GM12878 (cell line): ENCODE measurements at regions of chr1 and their contacts with region 1.

Region 1: GRCh38 chr1:212994926-212995325 is 20.7 kb downstream of the ANGEL2 start:
- DNase-seq: no peak
- ATAC-seq: no peak
- H3K4me3 ChIP-seq: no peak overlapping the region
- H3K27ac ChIP-seq: no peak overlapping the region
- H3K4me1 ChIP-seq: no peaks in the 10 kb centered on the region
- H3K27me3 ChIP-seq: no peaks in the 10 kb centered on the region
- CTCF ChIP-seq: no peak
- EP300 ChIP-seq: no peak
- POLR2A ChIP-seq: no peak
- RAD21 ChIP-seq: no peak

Region 2: GRCh38 chr1:212699104-212699624 is 295.8 kb before region 1 on chr1:
- CTCF ChIA-PET with region 1: interaction called, 12 read pairs
- POLR2A ChIA-PET with region 1: no interaction called
- RAD21 ChIA-PET with region 1: interaction called, 6 read pairs
- SMC1A ChIA-PET with region 1: interaction called, 9 read pairs
- in situ Hi-C with region 1: no loop called
- intact Hi-C with region 1: no loop called
- DNase-seq: no peak
- ATAC-seq: peak; percentile 81
- H3K4me3 ChIP-seq: peak overlapping the region; percentile 82
- H3K27ac ChIP-seq: no peak overlapping the region
- H3K4me1 ChIP-seq: peaks cover 27% of the 10 kb centered on the region
- H3K27me3 ChIP-seq: no peaks in the 10 kb centered on the region
- CTCF ChIP-seq: peak; percentile 48 to 79 (median 71)
- EP300 ChIP-seq: no peak
- POLR2A ChIP-seq: no peak
- RAD21 ChIP-seq: peak; percentile 51

Region 3: GRCh38 chr1:212791676-212792395 is 203.1 kb before region 1 on chr1 and contains the starts of genes NSL1 and TATDN3:
- CTCF ChIA-PET with region 1: interaction called, 8 read pairs
- POLR2A ChIA-PET with region 1: no interaction called
- RAD21 ChIA-PET with region 1: interaction called, 6 read pairs
- SMC1A ChIA-PET with region 1: interaction called, 14 read pairs
- in situ Hi-C with region 1: no loop called
- intact Hi-C with region 1: loop called (anchors 2 kb)
- DNase-seq: peak; percentile 90
- ATAC-seq: peak; percentile 83
- H3K4me3 ChIP-seq: peak within 1 kb of the TSS; percentile 78
- H3K27ac ChIP-seq: peak within 1 kb of the TSS; percentile 97
- H3K4me1 ChIP-seq: peaks cover 8% of the 10 kb centered on the region
- H3K27me3 ChIP-seq: no peaks in the 10 kb centered on the region
- CTCF ChIP-seq: no peak
- EP300 ChIP-seq: no peak
- POLR2A ChIP-seq: peak; percentile 99
- RAD21 ChIP-seq: no peak
- polyA plus RNA-seq, gene NSL1: 46.5 to 67.2 TPM
- polyA plus RNA-seq, gene TATDN3: 34.0 to 40.0 TPM

Region 4: DNA sequence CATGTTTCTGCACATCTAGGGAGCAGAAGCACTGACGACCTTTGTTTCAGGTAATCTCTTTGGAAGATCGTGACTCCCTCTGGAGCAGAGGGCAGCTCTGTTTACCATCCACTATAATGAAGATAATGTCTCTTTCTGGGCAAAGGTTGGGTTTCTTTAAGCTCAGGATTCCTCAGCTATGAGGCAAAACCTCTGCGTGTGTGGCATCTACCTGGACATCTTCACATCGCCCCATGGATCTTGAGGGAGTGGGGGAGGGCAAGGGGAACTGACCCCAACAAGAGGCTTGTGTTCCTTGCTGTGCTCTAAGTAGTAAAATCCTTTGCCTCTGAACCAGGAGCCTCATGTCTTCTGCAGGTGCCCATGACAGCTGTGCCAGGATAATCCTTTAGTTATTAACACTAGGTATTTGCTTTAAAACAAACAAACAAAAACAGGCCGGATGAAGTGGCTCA is 167.1 kb before region 1 on chr1:
- CTCF ChIA-PET with region 1: interaction called, 8 read pairs
- POLR2A ChIA-PET with region 1: interaction called, 3 read pairs
- RAD21 ChIA-PET with region 1: interaction called, 4 read pairs
- SMC1A ChIA-PET with region 1: interaction called, 13 read pairs
- in situ Hi-C with region 1: no loop called
- intact Hi-C with region 1: no loop called
- DNase-seq: no peak
- ATAC-seq: no peak
- H3K4me3 ChIP-seq: no peak overlapping the region
- H3K27ac ChIP-seq: no peak overlapping the region
- H3K4me1 ChIP-seq: peaks cover 7% of the 10 kb centered on the region
- H3K27me3 ChIP-seq: no peaks in the 10 kb centered on the region
- CTCF ChIP-seq: no peak
- EP300 ChIP-seq: no peak
- POLR2A ChIP-seq: no peak
- RAD21 ChIP-seq: no peak

Region 5: GRCh38 chr1:212920896-212921295 is 74.0 kb before region 1 on chr1:
- CTCF ChIA-PET with region 1: interaction called, 43 read pairs
- POLR2A ChIA-PET with region 1: interaction called, 3 read pairs
- RAD21 ChIA-PET with region 1: interaction called, 22 read pairs
- SMC1A ChIA-PET with region 1: interaction called, 26 read pairs
- in situ Hi-C with region 1: no loop called
- intact Hi-C with region 1: loop called (anchors 1 kb)
- DNase-seq: no peak
- ATAC-seq: peak; percentile 51
- H3K4me3 ChIP-seq: no peak overlapping the region
- H3K27ac ChIP-seq: no peak overlapping the region
- H3K4me1 ChIP-seq: peaks cover 20% of the 10 kb centered on the region
- H3K27me3 ChIP-seq: no peaks in the 10 kb centered on the region
- CTCF ChIP-seq: peak; percentile 45 to 67 (median 57); a peak in 5 of 6 replicates
- EP300 ChIP-seq: no peak
- POLR2A ChIP-seq: no peak
- RAD21 ChIP-seq: peak; percentile 71

Region 6: GRCh38 chr1:212967801-212968200 is 27.1 kb before region 1 on chr1:
- CTCF ChIA-PET with region 1: interaction called, 30 read pairs
- POLR2A ChIA-PET with region 1: no interaction called
- RAD21 ChIA-PET with region 1: interaction called, 9 read pairs
- SMC1A ChIA-PET with region 1: interaction called, 17 read pairs
- in situ Hi-C with region 1: no loop called
- intact Hi-C with region 1: no loop called
- DNase-seq: no peak
- ATAC-seq: peak; percentile 92
- H3K4me3 ChIP-seq: no peak overlapping the region
- H3K27ac ChIP-seq: 0 out of 2 replicates have a peak overlapping the region, but pooled peaks have one; percentile 12
- H3K4me1 ChIP-seq: peaks cover 24% of the 10 kb centered on the region
- H3K27me3 ChIP-seq: no peaks in the 10 kb centered on the region
- CTCF ChIP-seq: peak; percentile 36 to 70 (median 66)
- EP300 ChIP-seq: no peak
- POLR2A ChIP-seq: no peak
- RAD21 ChIP-seq: peak; percentile 36; the same call in 1 of the 2 replicates

Region 7: DNA sequence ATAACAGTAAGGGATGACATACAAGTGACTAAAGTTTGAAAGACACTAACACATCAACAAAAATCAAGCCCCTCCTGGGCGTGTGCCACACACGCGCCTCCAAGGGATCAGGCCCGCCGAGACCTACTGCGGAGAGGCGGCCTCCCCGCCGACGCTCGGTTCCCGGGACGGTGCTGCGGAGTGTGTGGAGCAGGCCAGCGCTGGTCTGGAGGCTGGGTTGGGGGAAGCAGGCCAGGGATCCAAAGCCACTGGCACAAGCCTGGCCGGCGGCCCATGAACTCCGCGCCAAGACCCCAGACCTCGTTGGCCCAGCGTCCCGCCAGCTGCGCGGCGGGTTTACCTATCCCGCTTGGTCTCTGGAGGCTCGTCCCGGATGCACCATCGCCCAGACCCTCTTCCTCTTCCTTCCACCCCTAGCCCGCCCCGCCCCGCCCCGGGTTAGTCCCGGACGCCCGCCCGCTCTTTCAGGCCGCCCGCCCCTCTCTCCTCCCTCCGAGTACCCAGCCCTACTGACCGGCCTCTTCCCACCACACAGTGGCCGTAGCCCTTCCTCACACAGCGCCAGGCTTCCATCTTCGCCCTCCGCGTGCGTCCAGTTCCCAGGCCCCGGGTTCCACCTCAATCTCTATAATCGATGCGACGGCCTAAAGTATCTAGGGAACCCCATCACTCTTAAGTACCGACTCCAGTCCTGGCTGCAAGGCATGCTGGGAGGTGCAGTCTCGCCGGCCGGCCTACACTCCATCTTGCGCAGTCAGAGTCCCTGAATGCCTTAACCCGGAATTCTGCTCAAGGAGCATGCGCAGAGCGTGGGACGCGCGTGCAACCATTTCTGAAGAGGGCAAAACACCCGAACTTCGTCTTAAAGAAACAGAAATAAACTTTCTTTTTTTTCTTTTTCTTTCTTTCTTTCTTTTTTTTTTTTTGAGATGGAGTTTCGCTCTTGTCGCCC is 20.4 kb after region 1 on chr1 and contains the start of gene ANGEL2:
- CTCF ChIA-PET with region 1: interaction called, 13 read pairs
- POLR2A ChIA-PET with region 1: interaction called, 5 read pairs
- RAD21 ChIA-PET with region 1: interaction called, 4 read pairs
- SMC1A ChIA-PET with region 1: interaction called, 8 read pairs
- in situ Hi-C with region 1: no loop called
- intact Hi-C with region 1: no loop called
- DNase-seq: peak; percentile 94
- ATAC-seq: peak; percentile 96
- H3K4me3 ChIP-seq: peak within 1 kb of the TSS; percentile 91
- H3K27ac ChIP-seq: peak within 1 kb of the TSS; percentile 92
- H3K4me1 ChIP-seq: no peaks in the 10 kb centered on the region
- H3K27me3 ChIP-seq: no peaks in the 10 kb centered on the region
- CTCF ChIP-seq: no peak
- EP300 ChIP-seq: no peak; a peak in 1 of 4 replicates
- POLR2A ChIP-seq: peak; percentile 90
- RAD21 ChIP-seq: no peak
- polyA plus RNA-seq, gene ANGEL2: 6.3 to 13.6 TPM